RWPE1 (cell line): ENCODE measurements at regions of chr4 and their contacts with region 1.

Region 1: GRCh38 chr4:25993395-25994185 is 79.6 kb downstream of the SMIM20 start:
- DNase-seq: peak; percentile 17
- H3K27ac ChIP-seq: no peak overlapping the region
- CTCF ChIP-seq: no peak

Region 2: GRCh38 chr4:25972984-25973745 is 20.4 kb before region 1 on chr4:
- CTCF ChIA-PET with region 1: interaction called, 10 read pairs
- POLR2A ChIA-PET with region 1: no interaction called
- DNase-seq: no peak
- H3K27ac ChIP-seq: no peak overlapping the region
- CTCF ChIP-seq: no peak

Region 3: DNA sequence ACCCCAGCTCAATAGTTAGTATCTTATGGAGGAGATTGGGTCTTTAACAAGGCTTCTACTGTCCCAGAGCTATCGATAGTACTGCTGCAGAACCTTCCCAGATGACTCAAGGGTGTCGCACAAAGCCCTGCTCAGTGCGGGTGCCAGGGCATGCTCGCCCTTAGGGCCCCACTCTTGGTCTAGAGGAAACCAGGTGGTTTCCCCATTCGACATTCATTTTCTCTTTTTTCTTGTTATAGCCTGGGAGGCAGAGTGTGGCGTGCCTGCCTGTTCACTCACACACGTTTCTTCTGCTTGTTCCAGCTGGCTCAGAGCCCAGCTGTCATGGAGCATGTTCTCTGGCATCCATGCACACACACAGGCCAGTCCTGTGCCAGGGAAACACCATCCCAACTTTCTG is 64.9 kb after region 1 on chr4:
- CTCF ChIA-PET with region 1: no interaction called
- POLR2A ChIA-PET with region 1: no interaction called
- DNase-seq: peak; percentile 41
- H3K27ac ChIP-seq: peak overlapping the region; percentile 38
- CTCF ChIP-seq: no peak

Region 4: DNA sequence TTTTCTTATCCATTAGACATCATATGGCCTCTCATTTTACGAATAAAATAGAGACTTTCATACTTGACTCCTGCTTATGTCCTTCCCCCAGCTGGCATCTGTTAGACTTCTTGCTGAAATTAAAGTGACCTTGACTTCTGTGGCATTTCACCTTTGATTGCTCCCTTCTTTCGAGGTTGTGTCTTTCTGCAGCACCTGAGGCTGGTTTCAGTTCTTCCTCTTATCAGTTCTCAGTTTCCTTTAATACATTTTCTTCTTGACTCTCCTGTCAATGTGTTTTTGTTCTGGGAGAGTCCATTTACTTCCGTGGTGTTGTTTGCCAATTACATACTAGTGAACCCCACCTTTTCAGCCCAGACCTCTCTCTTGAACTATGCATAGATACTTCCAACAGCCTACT is 408.9 kb after region 1 on chr4:
- CTCF ChIA-PET with region 1: interaction called, 21 read pairs
- POLR2A ChIA-PET with region 1: no interaction called
- DNase-seq: no peak
- H3K27ac ChIP-seq: no peak overlapping the region
- CTCF ChIP-seq: no peak

Region 5: DNA sequence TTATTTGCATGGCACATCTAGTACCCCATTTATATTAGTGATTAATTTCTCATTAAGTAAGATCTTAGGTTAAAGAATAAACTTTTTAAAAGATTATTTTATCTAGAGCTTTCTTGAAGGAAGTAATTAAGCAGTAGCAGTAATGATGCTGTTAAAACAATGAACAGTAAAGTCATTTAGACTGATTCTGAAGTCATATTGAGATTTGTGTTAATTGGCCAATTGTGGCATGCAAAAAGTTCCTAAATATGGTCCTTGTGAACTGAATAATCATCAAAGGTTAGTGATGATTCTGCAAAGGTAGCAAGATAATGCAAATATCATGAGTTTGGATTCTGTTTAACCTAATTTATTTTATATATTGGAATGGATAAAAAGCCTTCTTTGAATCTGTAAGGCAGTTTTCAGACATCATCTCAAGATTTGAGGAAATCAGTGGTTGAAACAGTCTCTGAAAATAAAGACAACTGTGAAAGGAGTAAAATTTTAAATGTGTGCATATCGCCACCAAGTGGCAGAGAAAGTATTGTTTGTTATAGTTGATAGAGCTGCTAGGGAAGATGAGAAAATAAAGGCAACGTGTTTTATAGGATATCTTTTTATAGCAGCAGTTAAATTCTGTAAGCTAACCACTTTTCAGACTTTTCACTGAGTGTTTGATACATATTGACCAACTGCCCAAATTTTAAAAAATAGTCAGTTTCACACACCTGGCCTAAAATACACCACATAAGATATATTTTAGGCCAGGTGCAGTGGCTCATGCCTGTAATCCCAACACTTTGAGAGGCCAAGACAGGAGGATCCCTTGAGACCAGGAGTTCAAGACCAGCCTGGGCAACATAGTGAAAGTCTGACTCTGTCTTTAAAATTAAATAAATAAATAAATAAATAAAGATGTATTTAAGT is 417.0 kb after region 1 on chr4:
- CTCF ChIA-PET with region 1: interaction called, 21 read pairs
- POLR2A ChIA-PET with region 1: no interaction called
- DNase-seq: peak; percentile 36
- H3K27ac ChIP-seq: no peak overlapping the region
- CTCF ChIP-seq: peak; percentile 67